Caco-2 (cell line): ENCODE measurements at regions of chr21 and their contacts with region 1.

Region 1: DNA sequence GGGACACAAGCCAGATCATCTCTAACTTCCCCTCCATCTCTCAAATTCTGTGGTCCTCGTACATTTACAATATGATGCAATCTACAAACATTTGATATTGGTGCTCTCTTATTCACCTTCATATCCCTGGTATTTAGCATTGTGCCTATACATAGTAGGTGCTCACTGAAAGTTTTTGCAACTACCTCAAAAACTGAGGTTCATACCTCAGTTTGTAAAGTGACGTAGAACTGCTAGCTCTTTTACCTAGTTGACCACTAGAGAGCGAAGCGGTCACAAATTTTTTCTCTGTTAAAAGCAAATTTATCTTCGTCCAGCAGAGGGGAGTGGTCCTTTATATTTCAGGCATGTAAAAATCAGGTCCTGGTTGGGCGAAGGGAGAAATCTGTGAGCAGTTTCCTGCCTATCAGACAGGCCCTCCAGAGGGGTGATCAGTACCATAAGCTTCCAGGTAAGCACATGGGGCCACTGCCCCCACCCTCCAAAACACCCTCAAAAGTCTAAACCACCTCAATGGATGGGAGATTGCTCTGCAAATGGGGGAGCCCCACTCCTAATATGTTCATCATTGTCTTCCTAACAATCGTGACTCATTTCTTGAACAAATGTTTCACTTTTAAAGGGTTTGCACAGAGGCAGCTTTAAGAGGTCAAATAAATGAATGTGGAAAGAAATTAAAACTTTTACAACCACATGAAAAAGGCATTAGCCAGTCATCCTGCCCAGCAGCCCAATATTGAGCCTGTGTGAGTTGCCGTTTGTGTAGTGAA is 10.6 kb upstream of the HLCS start:
- DNase-seq: peak; percentile 60 to 72
- H3K4me3 ChIP-seq: no peak overlapping the region
- H3K4me3 Mint-ChIP-seq: no peak overlapping the region
- H3K27ac Mint-ChIP-seq: no peak overlapping the region
- H3K4me1 ChIP-seq: no peaks in the 10 kb centered on the region
- H3K4me1 Mint-ChIP-seq: peaks cover 16% of the 10 kb centered on the region
- H3K27me3 ChIP-seq: no peaks in the 10 kb centered on the region
- H3K27me3 Mint-ChIP-seq: no peaks in the 10 kb centered on the region
- CTCF ChIP-seq: peak; percentile 77 to 85

Region 2: GRCh38 chr21:36403713-36404112 is 573.4 kb before region 1 on chr21:
- CTCF ChIA-PET with region 1: no interaction called
- POLR2A ChIA-PET with region 1: no interaction called
- intact Hi-C with region 1: no loop called
- DNase-seq: no peak
- H3K4me3 ChIP-seq: no peak overlapping the region
- H3K4me3 Mint-ChIP-seq: no peak overlapping the region
- H3K27ac Mint-ChIP-seq: no peak overlapping the region
- H3K4me1 ChIP-seq: no peaks in the 10 kb centered on the region
- H3K4me1 Mint-ChIP-seq: no peaks in the 10 kb centered on the region
- H3K27me3 ChIP-seq: no peaks in the 10 kb centered on the region
- H3K27me3 Mint-ChIP-seq: no peaks in the 10 kb centered on the region
- CTCF ChIP-seq: no peak

Region 3: GRCh38 chr21:36966066-36966820 is 10.8 kb before region 1 on chr21 and contains the start of gene HLCS:
- CTCF ChIA-PET with region 1: interaction called, 22 read pairs
- POLR2A ChIA-PET with region 1: interaction called, 4 read pairs
- intact Hi-C with region 1: no loop called
- DNase-seq: peak; percentile 83 to 87
- H3K4me3 ChIP-seq: peak within 1 kb of the TSS; percentile 63
- H3K4me3 Mint-ChIP-seq: peak within 1 kb of the TSS; percentile 90
- H3K27ac Mint-ChIP-seq: peak within 1 kb of the TSS; percentile 98
- H3K4me1 ChIP-seq: peaks cover 26% of the 10 kb centered on the region
- H3K4me1 Mint-ChIP-seq: peaks cover 10% of the 10 kb centered on the region
- H3K27me3 ChIP-seq: no peaks in the 10 kb centered on the region
- H3K27me3 Mint-ChIP-seq: no peaks in the 10 kb centered on the region
- CTCF ChIP-seq: peak; percentile 22 to 30
- total RNA-seq, gene HLCS: 21.8 and 26.2 TPM in 2 replicates

Region 4: GRCh38 chr21:36989699-36990507 is 12.8 kb after region 1 on chr21:
- CTCF ChIA-PET with region 1: interaction called, 17 read pairs
- POLR2A ChIA-PET with region 1: interaction called, 6 read pairs
- intact Hi-C with region 1: no loop called
- DNase-seq: peak; percentile 92 to 95
- H3K4me3 ChIP-seq: peak overlapping the region; percentile 46
- H3K4me3 Mint-ChIP-seq: peak overlapping the region; percentile 96
- H3K27ac Mint-ChIP-seq: peak overlapping the region; percentile 96
- H3K4me1 ChIP-seq: peaks cover 15% of the 10 kb centered on the region
- H3K4me1 Mint-ChIP-seq: peaks cover 12% of the 10 kb centered on the region
- H3K27me3 ChIP-seq: no peaks in the 10 kb centered on the region
- H3K27me3 Mint-ChIP-seq: no peaks in the 10 kb centered on the region
- CTCF ChIP-seq: peak in 1 of 2 experiments; percentile 68

Region 5: GRCh38 chr21:37009740-37010341 is 32.8 kb after region 1 on chr21:
- CTCF ChIA-PET with region 1: interaction called, 41 read pairs
- POLR2A ChIA-PET with region 1: interaction called, 5 read pairs
- intact Hi-C with region 1: loop called (anchors 1 kb)
- DNase-seq: peak; percentile 87 to 90
- H3K4me3 ChIP-seq: peak overlapping the region; percentile 43
- H3K4me3 Mint-ChIP-seq: peak overlapping the region; percentile 70
- H3K27ac Mint-ChIP-seq: no peak overlapping the region
- H3K4me1 ChIP-seq: no peaks in the 10 kb centered on the region
- H3K4me1 Mint-ChIP-seq: no peaks in the 10 kb centered on the region
- H3K27me3 ChIP-seq: no peaks in the 10 kb centered on the region
- H3K27me3 Mint-ChIP-seq: no peaks in the 10 kb centered on the region
- CTCF ChIP-seq: peak; percentile 85 to 87

Region 6: DNA sequence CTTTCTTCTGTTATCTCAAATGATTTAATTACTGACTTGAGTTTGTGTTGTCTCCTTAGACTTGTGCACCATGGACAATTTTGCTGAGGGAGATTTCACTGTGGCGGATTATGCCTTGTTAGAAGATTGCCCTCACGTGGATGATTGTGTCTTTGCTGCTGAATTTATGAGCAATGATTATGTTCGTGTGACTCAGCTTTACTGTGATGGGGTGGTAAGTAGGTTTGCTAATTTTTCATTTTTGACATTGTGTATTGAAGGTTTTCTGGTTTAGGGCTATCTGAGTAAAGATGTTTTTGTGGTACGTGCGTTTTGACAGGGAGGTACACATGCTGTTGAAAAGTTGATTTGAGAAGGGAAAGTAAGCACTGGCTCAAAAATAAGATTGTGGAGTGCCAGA is 110.1 kb after region 1 on chr21:
- CTCF ChIA-PET with region 1: interaction called, 5 read pairs
- POLR2A ChIA-PET with region 1: no interaction called
- intact Hi-C with region 1: loop called (anchors 1 kb)
- DNase-seq: peak in 1 of 2 experiments; percentile 8
- H3K4me3 ChIP-seq: no peak overlapping the region
- H3K4me3 Mint-ChIP-seq: no peak overlapping the region
- H3K27ac Mint-ChIP-seq: no peak overlapping the region
- H3K4me1 ChIP-seq: peaks cover 4% of the 10 kb centered on the region; the same call in 1 of the 2 replicates
- H3K4me1 Mint-ChIP-seq: peaks cover 12% of the 10 kb centered on the region
- H3K27me3 ChIP-seq: no peaks in the 10 kb centered on the region
- H3K27me3 Mint-ChIP-seq: no peaks in the 10 kb centered on the region
- CTCF ChIP-seq: peak in 1 of 2 experiments; percentile 31

Region 7: GRCh38 chr21:37176711-37177110 is 199.6 kb after region 1 on chr21:
- CTCF ChIA-PET with region 1: no interaction called
- POLR2A ChIA-PET with region 1: no interaction called
- intact Hi-C with region 1: no loop called
- DNase-seq: peak in 1 of 2 experiments; percentile 26
- H3K4me3 ChIP-seq: no peak overlapping the region
- H3K4me3 Mint-ChIP-seq: no peak overlapping the region
- H3K27ac Mint-ChIP-seq: no peak overlapping the region
- H3K4me1 ChIP-seq: no peaks in the 10 kb centered on the region
- H3K4me1 Mint-ChIP-seq: no peaks in the 10 kb centered on the region
- H3K27me3 ChIP-seq: no peaks in the 10 kb centered on the region
- H3K27me3 Mint-ChIP-seq: no peaks in the 10 kb centered on the region
- CTCF ChIP-seq: no peak